Activated CD4-positive, alpha-beta memory T cell treated with anti-CD3 and anti-CD28 coated beads, Interleukin-2, amount 10 ng/mL, durations not matched to agents 7 days and 5 days (primary cell): ENCODE measurements at regions of chr7 and their contacts with region 1.

Region 1: GRCh38 chr7:44980393-44981034 is 1.7 kb upstream of the MYO1G start:
- DNase-seq: peak; percentile 75
- H3K4me3 Mint-ChIP-seq: peak overlapping the region; percentile 99
- H3K27ac Mint-ChIP-seq: peak overlapping the region; percentile 96
- H3K4me1 Mint-ChIP-seq: peaks cover 76% of the 10 kb centered on the region
- H3K27me3 Mint-ChIP-seq: no peaks in the 10 kb centered on the region

Region 2: DNA sequence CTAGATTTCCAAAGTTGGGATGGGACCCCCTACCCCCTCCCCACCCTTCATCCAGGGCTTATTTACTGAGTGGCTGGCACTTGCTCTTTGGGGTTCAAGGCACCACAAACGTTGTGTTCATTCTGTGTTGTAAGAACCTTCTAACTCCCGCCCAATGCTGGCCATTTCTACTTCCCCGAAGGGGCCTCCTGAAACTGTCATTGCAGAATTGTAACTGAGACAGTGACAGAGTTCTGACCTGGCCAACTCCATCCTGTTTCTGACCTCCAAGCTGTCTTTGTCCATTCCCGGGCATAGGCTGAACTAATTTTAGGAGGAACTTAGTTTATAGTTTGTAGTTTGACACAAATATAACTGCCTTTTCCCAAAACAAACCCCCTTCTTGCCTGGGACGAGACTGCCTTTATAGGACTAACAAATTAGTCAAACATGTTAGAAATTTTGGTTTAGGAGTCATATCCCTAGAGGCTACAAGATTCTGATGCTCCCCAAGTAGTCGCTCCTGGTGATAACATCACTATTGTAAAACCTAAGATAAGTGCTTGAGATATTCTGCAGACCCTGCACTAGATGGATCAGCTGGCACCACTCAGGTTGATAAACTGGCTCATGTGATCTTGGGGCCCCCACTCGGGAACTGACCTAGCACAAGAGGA is 266.7 kb before region 1 on chr7:
- CTCF ChIA-PET with region 1: no interaction called
- POLR2A ChIA-PET with region 1: no interaction called
- DNase-seq: no peak
- H3K4me3 Mint-ChIP-seq: no peak overlapping the region
- H3K27ac Mint-ChIP-seq: no peak overlapping the region
- H3K4me1 Mint-ChIP-seq: peaks cover 16% of the 10 kb centered on the region
- H3K27me3 Mint-ChIP-seq: no peaks in the 10 kb centered on the region

Region 3: GRCh38 chr7:45033261-45033930 is 52.9 kb after region 1 on chr7:
- CTCF ChIA-PET with region 1: interaction called, 5 read pairs
- POLR2A ChIA-PET with region 1: interaction called, 412 read pairs
- DNase-seq: peak; percentile 28
- H3K4me3 Mint-ChIP-seq: peak overlapping the region; percentile 55
- H3K27ac Mint-ChIP-seq: peak overlapping the region; percentile 79
- H3K4me1 Mint-ChIP-seq: peaks cover 78% of the 10 kb centered on the region
- H3K27me3 Mint-ChIP-seq: no peaks in the 10 kb centered on the region

Region 4: GRCh38 chr7:45111298-45112223 is 131.0 kb after region 1 on chr7 and contains the start of gene TBRG4:
- CTCF ChIA-PET with region 1: interaction called, 3 read pairs
- POLR2A ChIA-PET with region 1: interaction called, 68 read pairs
- DNase-seq: peak; percentile 96
- H3K4me3 Mint-ChIP-seq: peak within 1 kb of the TSS; percentile 90
- H3K27ac Mint-ChIP-seq: peak within 1 kb of the TSS; percentile 89
- H3K4me1 Mint-ChIP-seq: peaks cover 50% of the 10 kb centered on the region
- H3K27me3 Mint-ChIP-seq: peaks cover 10% of the 10 kb centered on the region
- total RNA-seq, gene TBRG4: 98.8 to 103 TPM

Region 5: GRCh38 chr7:45122975-45123860 is 142.7 kb after region 1 on chr7:
- CTCF ChIA-PET with region 1: no interaction called
- POLR2A ChIA-PET with region 1: interaction called, 17 read pairs
- DNase-seq: peak; percentile 49
- H3K4me3 Mint-ChIP-seq: peak overlapping the region; percentile 55
- H3K27ac Mint-ChIP-seq: peak overlapping the region; percentile 93
- H3K4me1 Mint-ChIP-seq: peaks cover 31% of the 10 kb centered on the region
- H3K27me3 Mint-ChIP-seq: no peaks in the 10 kb centered on the region

Region 6: GRCh38 chr7:45306752-45307305 is 326.3 kb after region 1 on chr7:
- CTCF ChIA-PET with region 1: no interaction called
- POLR2A ChIA-PET with region 1: no interaction called
- DNase-seq: no peak
- H3K4me3 Mint-ChIP-seq: no peak overlapping the region
- H3K27ac Mint-ChIP-seq: no peak overlapping the region
- H3K4me1 Mint-ChIP-seq: no peaks in the 10 kb centered on the region
- H3K27me3 Mint-ChIP-seq: peaks cover 19% of the 10 kb centered on the region